ENCODE measurements at regions of chr11 and their contacts with region 1.

Region 1: GRCh38 chr11:122853971-122854446 is 15.7 kb downstream of the CRTAM start:
- DNase-seq: peak in 1 of 2 experiments; percentile 53
- H3K4me3 ChIP-seq: no peak overlapping the region
- H3K27ac ChIP-seq: no peak overlapping the region
- H3K4me1 ChIP-seq: peaks cover 0 to 2% (median 0%) of the 10 kb centered on the region in 4 experiments; a peak in 4 of 7 replicates
- H3K27me3 ChIP-seq: no peaks in the 10 kb centered on the region
- CTCF ChIP-seq: peak in 2 of 3 experiments; percentile 59 to 69; a peak in 3 of 4 replicates
- EP300 ChIP-seq: no peak
- POLR2A ChIP-seq: no peak
- RAD21 ChIP-seq: peak; percentile 84 to 85

Region 2: GRCh38 chr11:122781378-122782195 is 72.4 kb before region 1 on chr11:
- CTCF ChIA-PET with region 1: interaction called, 57 read pairs
- POLR2A ChIA-PET with region 1: no interaction called
- DNase-seq: peak; percentile 77 to 95
- H3K4me3 ChIP-seq: no peak overlapping the region
- H3K27ac ChIP-seq: no peak overlapping the region
- H3K4me1 ChIP-seq: peaks cover 0 to 2% (median 0%) of the 10 kb centered on the region in 4 experiments; a peak in 4 of 7 replicates
- H3K27me3 ChIP-seq: no peaks in the 10 kb centered on the region
- CTCF ChIP-seq: peak; percentile 81 to 95 (median 93)
- EP300 ChIP-seq: no peak
- POLR2A ChIP-seq: no peak
- RAD21 ChIP-seq: peak; percentile 89 to 94

Region 3: DNA sequence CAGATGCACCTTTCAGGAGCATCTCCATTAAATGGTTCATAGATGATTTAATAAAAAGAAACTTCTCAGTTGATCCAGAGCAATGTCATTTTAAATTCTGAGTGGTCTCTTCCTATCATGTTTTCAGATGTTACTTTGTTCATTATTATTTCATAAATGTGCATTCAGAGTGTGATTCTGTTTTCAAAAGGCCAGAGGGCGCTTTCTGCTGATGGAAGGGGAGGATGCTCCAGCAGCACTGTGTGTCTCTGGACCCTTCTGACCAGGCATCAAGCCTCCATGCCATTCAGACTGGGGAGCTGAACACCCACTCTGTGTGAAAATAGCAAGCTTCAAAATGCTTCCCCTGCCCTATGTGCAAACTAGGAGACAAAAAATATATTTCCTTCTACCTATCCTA is 39.6 kb before region 1 on chr11:
- CTCF ChIA-PET with region 1: interaction called, 90 read pairs
- POLR2A ChIA-PET with region 1: interaction called, 9 read pairs
- DNase-seq: no peak
- H3K4me3 ChIP-seq: no peak overlapping the region
- H3K27ac ChIP-seq: no peak overlapping the region
- H3K4me1 ChIP-seq: peaks cover 0 to 10% (median 7%) of the 10 kb centered on the region in 4 experiments; a peak in 5 of 7 replicates
- H3K27me3 ChIP-seq: no peaks in the 10 kb centered on the region
- CTCF ChIP-seq: peak; percentile 30 to 47 (median 36)
- EP300 ChIP-seq: no peak
- POLR2A ChIP-seq: no peak
- RAD21 ChIP-seq: peak; percentile 42 to 59

Region 4: GRCh38 chr11:122832721-122833470 is 21.1 kb before region 1 on chr11:
- CTCF ChIA-PET with region 1: interaction called, 49 read pairs
- POLR2A ChIA-PET with region 1: interaction called, 4 read pairs
- DNase-seq: no peak
- H3K4me3 ChIP-seq: no peak overlapping the region
- H3K27ac ChIP-seq: no peak overlapping the region
- H3K4me1 ChIP-seq: peaks cover 0 to 9% (median under 1%) of the 10 kb centered on the region in 4 experiments; a peak in 1 of 7 replicates
- H3K27me3 ChIP-seq: no peaks in the 10 kb centered on the region
- CTCF ChIP-seq: no peak
- EP300 ChIP-seq: no peak
- POLR2A ChIP-seq: no peak
- RAD21 ChIP-seq: no peak

Region 5: DNA sequence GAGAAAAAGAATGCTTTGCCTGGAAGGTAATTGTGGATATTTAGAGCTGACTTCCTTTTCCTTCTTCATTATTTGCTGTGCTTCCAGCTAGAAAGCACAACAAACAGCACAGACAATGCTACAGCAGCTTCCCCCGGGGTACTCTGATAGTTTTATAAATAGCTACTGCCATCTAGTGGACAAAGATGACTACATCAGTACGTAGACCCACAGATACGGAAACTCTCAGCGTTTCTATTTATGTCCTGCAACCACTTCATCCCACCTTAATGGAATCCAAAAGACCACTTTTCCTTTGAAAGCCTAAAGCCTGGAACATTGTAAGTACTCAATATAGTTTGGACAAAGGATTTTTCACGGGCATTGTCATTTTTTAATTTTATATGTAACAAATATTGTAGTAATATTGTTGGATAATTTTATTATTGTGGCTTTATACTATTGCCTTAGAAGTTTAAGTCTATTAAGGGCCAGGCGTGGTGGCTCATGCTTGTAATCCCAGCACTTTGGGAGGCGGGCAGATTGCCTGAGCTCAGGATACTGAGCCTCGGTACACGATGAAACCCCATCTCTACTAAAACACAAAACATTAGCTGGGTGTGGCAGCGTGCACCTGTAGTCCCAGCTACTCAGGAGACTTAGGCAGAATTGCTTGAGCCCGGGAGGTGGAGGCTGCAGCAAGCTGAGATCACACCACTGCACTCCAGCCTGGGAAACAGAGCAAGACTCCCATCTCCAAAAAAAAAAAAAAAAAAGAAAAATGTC is 200.5 kb after region 1 on chr11:
- CTCF ChIA-PET with region 1: interaction called, 11 read pairs
- POLR2A ChIA-PET with region 1: no interaction called
- DNase-seq: no peak
- H3K4me3 ChIP-seq: no peak overlapping the region
- H3K27ac ChIP-seq: no peak overlapping the region
- H3K4me1 ChIP-seq: peaks cover 0 to 5% (median 2%) of the 10 kb centered on the region in 4 experiments; a peak in 4 of 7 replicates
- H3K27me3 ChIP-seq: no peaks in the 10 kb centered on the region
- CTCF ChIP-seq: peak in 2 of 3 experiments; percentile 66 to 68; a peak in 3 of 4 replicates
- EP300 ChIP-seq: no peak
- POLR2A ChIP-seq: peak in 1 of 2 experiments; percentile 18; a peak in 1 of 3 replicates
- RAD21 ChIP-seq: peak; percentile 70 to 80

Measured in H1 (cell line).